Upper lobe of right lung (tissue), 1 donor: ENCODE measurements at regions of chr9 and their contacts with region 1.

Region 1: GRCh38 chr9:113591001-113591898 is 127.7 kb downstream of the RGS3 start:
- DNase-seq: peak; percentile 79
- ATAC-seq: peak; percentile 59
- H3K4me3 ChIP-seq: no peak overlapping the region
- H3K27ac ChIP-seq: peak overlapping the region; percentile 47
- H3K4me1 ChIP-seq: peaks cover 53% of the 10 kb centered on the region
- H3K27me3 ChIP-seq: no peaks in the 10 kb centered on the region
- CTCF ChIP-seq: peak; percentile 88

Region 2: GRCh38 chr9:113275157-113276131 is 315.8 kb before region 1 on chr9 and contains the starts of genes CDC26 and PRPF4:
- intact Hi-C with region 1: loop called (anchors 10 kb)
- DNase-seq: peak; percentile 98
- ATAC-seq: peak; percentile 98
- H3K4me3 ChIP-seq: peak within 1 kb of the TSS; percentile 82
- H3K27ac ChIP-seq: peak within 1 kb of the TSS; percentile 93
- H3K4me1 ChIP-seq: peaks cover 10% of the 10 kb centered on the region
- H3K27me3 ChIP-seq: no peaks in the 10 kb centered on the region
- CTCF ChIP-seq: no peak
- total RNA-seq, gene CDC26: 29.5 TPM
- total RNA-seq, gene PRPF4: 13.2 TPM

Region 3: DNA sequence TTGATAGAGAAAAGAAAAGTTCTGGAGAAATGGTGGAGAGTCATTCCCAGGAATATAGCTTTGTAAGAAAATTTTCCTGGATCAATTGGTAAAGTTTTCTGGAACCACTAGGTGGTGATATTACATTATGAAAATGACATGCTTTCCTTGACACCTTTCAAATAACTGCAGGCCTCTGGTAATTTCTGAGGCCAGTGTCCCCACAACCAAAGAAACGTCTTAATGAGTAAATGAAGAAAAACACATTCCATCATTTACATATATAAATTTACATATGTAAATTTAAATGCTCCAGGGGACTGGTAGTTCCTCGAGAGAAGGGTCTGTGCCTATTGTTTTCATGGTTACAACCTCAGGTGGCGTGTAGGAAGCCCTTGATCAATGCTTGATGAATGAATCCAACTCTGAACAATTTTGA is 144.9 kb before region 1 on chr9:
- intact Hi-C with region 1: loop called (anchors 5 kb)
- DNase-seq: no peak
- ATAC-seq: peak; percentile 67
- H3K4me3 ChIP-seq: no peak overlapping the region
- H3K27ac ChIP-seq: no peak overlapping the region
- H3K4me1 ChIP-seq: no peaks in the 10 kb centered on the region
- H3K27me3 ChIP-seq: no peaks in the 10 kb centered on the region
- CTCF ChIP-seq: peak; percentile 78

Region 4: DNA sequence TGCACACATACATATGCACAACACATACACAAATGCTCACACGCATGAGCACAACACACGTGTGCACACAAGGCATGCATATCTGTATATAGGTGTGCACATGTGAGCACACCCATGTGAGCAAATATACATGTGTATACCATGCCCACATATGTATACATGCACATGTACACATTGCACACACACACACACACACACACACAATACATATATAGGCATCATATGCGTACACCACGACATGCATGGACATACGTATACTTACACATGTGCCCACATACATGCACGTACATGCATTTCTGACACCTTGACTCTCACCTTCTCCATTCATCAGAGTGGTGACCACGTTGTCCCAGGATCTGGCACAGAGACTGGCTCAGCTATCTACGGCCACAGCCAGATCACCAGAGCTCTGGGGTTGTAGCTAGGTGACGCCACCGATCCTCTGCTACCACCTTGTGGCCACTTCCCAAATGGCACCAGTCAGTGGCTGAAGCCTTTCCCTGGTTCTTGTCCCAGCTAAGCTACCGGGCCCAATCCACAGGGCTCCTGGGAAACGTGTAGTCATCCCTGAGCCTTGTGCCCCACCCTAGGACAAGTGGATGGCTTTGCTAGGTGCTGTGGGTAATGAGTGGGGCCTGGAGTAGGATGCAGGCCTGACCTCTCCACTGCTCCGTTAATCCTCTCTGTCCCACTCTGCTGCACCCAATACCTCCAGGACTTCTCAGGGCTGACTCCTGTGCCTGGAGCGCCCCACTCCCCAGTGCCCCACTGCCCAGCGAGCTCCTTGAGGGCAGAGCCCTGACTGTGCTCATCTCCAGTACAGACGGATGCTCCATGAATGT is 66.7 kb after region 1 on chr9:
- intact Hi-C with region 1: loop called (anchors 2 kb)
- DNase-seq: peak; percentile 85
- ATAC-seq: peak; percentile 93
- H3K4me3 ChIP-seq: no peak overlapping the region
- H3K27ac ChIP-seq: no peak overlapping the region
- H3K4me1 ChIP-seq: peaks cover 23% of the 10 kb centered on the region
- H3K27me3 ChIP-seq: peaks cover 5% of the 10 kb centered on the region
- CTCF ChIP-seq: peak; percentile 94

Region 5: GRCh38 chr9:113695901-113696300 is 104.7 kb after region 1 on chr9:
- intact Hi-C with region 1: no loop called
- DNase-seq: no peak
- ATAC-seq: no peak
- H3K4me3 ChIP-seq: no peak overlapping the region
- H3K27ac ChIP-seq: no peak overlapping the region
- H3K4me1 ChIP-seq: no peaks in the 10 kb centered on the region
- H3K27me3 ChIP-seq: no peaks in the 10 kb centered on the region
- CTCF ChIP-seq: no peak